Right cardiac atrium (tissue), 5 donors: ENCODE measurements at regions of chr7 and their contacts with region 1.

Region 1: GRCh38 chr7:70693686-70694360 is 438.1 kb upstream of the GALNT17 start:
- DNase-seq: peak; percentile 81 to 92 (median 92)
- ATAC-seq: peak; percentile 90 to 92
- H3K4me3 ChIP-seq: peak overlapping the region; percentile 96
- H3K27ac ChIP-seq: peak overlapping the region; percentile 26
- H3K4me1 ChIP-seq: peaks cover 3% of the 10 kb centered on the region
- H3K27me3 ChIP-seq: no peaks in the 10 kb centered on the region

Region 2: GRCh38 chr7:70040970-70041766 is 652.7 kb before region 1 on chr7:
- intact Hi-C with region 1: loop called in 2 of 4 experiments (anchors 5 to 10 kb)
- DNase-seq: no peak
- ATAC-seq: no peak
- H3K4me3 ChIP-seq: no peak overlapping the region
- H3K27ac ChIP-seq: no peak overlapping the region
- H3K4me1 ChIP-seq: no peaks in the 10 kb centered on the region
- H3K27me3 ChIP-seq: no peaks in the 10 kb centered on the region

Region 3: GRCh38 chr7:70178787-70179186 is 515.0 kb before region 1 on chr7:
- intact Hi-C with region 1: loop called in 1 of 4 experiments (anchors 10 kb)
- DNase-seq: no peak
- ATAC-seq: peak in 1 of 2 donors; percentile 40
- H3K4me3 ChIP-seq: no peak overlapping the region
- H3K27ac ChIP-seq: no peak overlapping the region
- H3K4me1 ChIP-seq: no peaks in the 10 kb centered on the region
- H3K27me3 ChIP-seq: no peaks in the 10 kb centered on the region

Region 4: GRCh38 chr7:70347880-70348279 is 345.9 kb before region 1 on chr7:
- intact Hi-C with region 1: loop called in 1 of 4 experiments (anchors 10 kb)
- DNase-seq: no peak
- ATAC-seq: no peak
- H3K4me3 ChIP-seq: no peak overlapping the region
- H3K27ac ChIP-seq: no peak overlapping the region
- H3K4me1 ChIP-seq: no peaks in the 10 kb centered on the region
- H3K27me3 ChIP-seq: no peaks in the 10 kb centered on the region

Region 5: GRCh38 chr7:70654979-70655378 is 38.8 kb before region 1 on chr7:
- intact Hi-C with region 1: no loop called
- DNase-seq: peak; percentile 68 to 84 (median 82)
- ATAC-seq: peak; percentile 92
- H3K4me3 ChIP-seq: no peak overlapping the region
- H3K27ac ChIP-seq: peak overlapping the region; percentile 53
- H3K4me1 ChIP-seq: no peaks in the 10 kb centered on the region
- H3K27me3 ChIP-seq: no peaks in the 10 kb centered on the region